ENCODE measurements at regions of chr2 and their contacts with region 1.

Region 1: DNA sequence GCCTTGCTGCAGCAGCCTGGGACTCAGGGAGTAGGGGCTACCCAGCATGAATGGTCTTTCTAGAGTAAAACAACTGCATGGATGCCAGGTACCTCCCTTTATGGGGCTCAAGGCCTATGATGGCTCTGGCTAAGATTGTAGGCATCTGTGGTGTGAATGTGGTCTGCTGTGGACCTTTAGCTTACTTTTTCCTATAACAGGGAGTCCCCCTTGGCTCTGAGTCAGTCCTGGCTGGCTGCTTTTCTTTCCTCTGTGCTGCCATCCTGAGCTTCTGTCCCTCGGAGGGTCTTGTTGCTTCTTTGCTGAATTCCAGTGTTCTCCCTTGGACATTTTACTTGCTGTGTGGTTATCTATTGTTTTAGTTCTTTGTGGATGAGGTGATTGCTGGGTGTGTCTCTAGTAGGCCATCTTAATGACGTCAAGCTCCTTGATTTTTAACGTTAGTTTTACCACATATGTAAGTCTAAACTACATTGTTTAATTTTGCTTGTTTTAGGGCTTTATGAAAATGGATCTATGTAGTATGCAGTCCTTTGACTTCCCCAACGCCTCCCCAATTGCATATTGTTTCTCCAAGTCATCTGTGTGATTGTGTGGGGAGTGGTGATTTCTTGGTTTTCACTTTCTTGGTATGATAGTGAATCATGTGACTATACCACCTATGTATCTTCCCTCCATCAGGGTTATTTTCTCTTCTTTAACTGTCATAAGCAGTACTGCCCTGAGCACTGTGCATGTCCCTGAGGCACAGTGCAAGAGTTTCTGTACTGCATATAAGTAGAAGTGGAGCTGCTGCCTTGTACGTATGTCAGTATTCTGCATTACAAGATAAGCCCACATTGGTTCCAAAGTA is 92.4 kb downstream of the NCK2 start:
- DNase-seq: peak; percentile 71
- H3K4me3 Mint-ChIP-seq: no peak overlapping the region
- H3K27ac Mint-ChIP-seq: peak overlapping the region; percentile 84
- H3K4me1 Mint-ChIP-seq: peaks cover 80% of the 10 kb centered on the region
- H3K27me3 Mint-ChIP-seq: no peaks in the 10 kb centered on the region

Region 2: GRCh38 chr2:105802587-105802986 is 34.5 kb before region 1 on chr2:
- CTCF ChIA-PET with region 1: interaction called, 3 read pairs
- intact Hi-C with region 1: loop called (anchors 1 kb)
- DNase-seq: peak; percentile 82
- H3K4me3 Mint-ChIP-seq: peak overlapping the region; percentile 8
- H3K27ac Mint-ChIP-seq: peak overlapping the region; percentile 86
- H3K4me1 Mint-ChIP-seq: peaks cover 94% of the 10 kb centered on the region
- H3K27me3 Mint-ChIP-seq: no peaks in the 10 kb centered on the region

Region 3: GRCh38 chr2:105809097-105809473 is 28.0 kb before region 1 on chr2:
- CTCF ChIA-PET with region 1: interaction called, 3 read pairs
- intact Hi-C with region 1: loop called (anchors 1 kb)
- DNase-seq: peak; percentile 76
- H3K4me3 Mint-ChIP-seq: no peak overlapping the region
- H3K27ac Mint-ChIP-seq: peak overlapping the region; percentile 73
- H3K4me1 Mint-ChIP-seq: peaks cover 87% of the 10 kb centered on the region
- H3K27me3 Mint-ChIP-seq: no peaks in the 10 kb centered on the region